Right ventricle myocardium inferior (tissue), 1 donor: ENCODE measurements at regions of chr1 and their contacts with region 1.

Region 1: DNA sequence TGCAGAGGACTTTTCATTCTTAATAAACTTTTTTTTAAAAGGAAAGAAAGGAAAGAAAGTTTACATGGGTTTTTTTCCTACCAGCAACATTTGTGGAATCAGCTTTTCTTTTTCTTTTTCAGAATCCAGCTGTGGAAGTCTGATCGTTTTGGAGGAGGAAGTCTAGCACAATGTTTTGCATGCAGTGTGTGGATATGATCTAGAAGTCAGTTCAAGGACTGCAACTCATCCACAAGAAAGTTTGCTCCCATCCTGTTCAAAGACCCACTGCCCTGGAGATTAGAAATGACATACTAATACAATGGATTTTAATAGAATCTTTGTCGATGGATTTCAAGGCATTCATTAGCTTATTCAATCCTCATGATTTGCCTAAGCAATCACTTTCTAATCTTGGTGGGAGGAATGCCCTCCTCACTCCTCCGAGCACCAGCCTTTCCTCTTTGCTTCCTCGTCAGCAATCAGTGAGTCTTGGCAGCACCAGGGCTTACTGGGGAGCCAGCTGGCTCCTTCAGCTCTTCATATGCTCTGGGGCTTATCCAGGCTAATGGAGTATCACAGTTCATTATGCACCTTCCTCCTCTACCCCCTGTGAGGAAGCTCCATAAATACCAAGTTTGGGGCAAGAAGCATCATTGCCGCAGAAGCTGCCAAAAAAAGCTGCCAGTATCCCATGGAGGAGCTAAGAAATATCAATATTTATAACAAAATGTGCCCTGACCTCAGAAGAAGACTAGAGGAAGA is 392.3 kb upstream of the PKN2 start:
- DNase-seq: no peak
- ATAC-seq: no peak

Region 2: DNA sequence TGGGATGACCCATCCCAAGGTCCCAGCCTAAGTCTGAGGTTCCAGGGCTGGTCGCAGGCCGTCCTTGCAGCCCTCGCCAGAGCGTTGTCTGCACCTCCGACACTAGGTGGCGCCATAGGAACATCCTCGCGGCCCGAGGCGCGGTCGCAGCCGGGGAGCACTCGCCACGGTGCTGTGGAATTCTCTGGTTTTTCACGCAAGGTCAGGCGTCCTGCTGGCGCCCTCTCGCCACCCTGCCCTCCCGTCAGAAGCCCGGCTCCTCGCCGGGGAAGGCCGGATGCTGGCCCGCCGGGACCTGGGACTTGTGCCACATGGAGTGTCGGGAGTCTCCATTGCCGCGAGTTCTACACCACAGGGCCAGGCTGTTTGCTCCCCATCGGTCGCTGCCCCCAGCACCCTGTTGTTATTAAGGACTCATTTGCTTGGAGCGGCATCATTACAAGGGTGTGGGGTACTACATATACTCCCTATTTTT is 1159.9 kb before region 1 on chr1:
- intact Hi-C with region 1: loop called (anchors 10 kb)
- DNase-seq: peak; percentile 88
- ATAC-seq: peak; percentile 90